Endothelial cell of umbilical vein (primary cell): ENCODE measurements at regions of chr7 and their contacts with region 1.

Region 1: DNA sequence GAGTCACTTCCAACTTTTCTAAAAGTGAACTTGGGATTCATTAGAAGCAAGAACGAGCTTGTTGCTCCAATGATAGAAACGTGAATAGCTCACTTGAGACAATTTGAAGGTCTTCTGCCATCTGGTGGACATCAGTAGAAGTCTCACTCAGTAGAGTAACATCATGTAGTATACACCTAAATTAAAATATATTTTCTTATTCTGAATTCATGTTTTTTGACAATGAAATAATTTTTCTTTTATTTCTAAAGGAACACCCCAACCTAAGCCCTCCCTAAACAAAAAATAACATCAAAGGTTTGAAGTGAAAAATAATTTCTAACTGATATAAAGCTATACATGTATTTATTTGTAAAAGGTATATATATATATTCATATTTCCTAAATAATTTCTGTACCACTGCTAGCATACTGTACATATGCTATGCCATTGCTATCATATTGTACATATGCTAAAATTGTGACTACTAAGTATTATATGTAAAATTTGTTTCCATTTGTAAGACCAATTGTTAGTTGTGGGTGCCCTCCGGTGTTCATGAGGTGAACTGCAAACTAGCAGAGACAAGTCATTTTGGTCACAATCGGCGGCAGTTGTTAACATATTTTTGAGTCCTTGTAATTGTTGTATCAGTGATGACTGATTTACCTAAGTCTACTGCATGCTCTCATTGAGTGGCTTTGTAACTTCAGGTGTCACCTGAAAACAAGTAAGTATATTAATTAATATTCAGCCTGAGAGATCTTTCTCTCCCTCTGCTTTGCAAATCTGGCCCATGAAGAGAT is 121.9 kb downstream of the PTPRZ1 start:
- DNase-seq: peak; percentile 69
- H3K4me3 ChIP-seq: no peak overlapping the region
- H3K27ac ChIP-seq: no peak overlapping the region
- H3K4me1 ChIP-seq: peaks cover 2% of the 10 kb centered on the region
- H3K27me3 ChIP-seq: peaks cover 3 to 5% of the 10 kb centered on the region in 2 experiments
- CTCF ChIP-seq: peak; percentile 45 to 59
- POLR2A ChIP-seq: no peak

Region 2: GRCh38 chr7:121107923-121108498 is 886.8 kb before region 1 on chr7:
- CTCF ChIA-PET with region 1: interaction called, 18 read pairs
- POLR2A ChIA-PET with region 1: no interaction called
- dilution Hi-C with region 1: no loop called
- intact Hi-C with region 1: no loop called
- DNase-seq: peak; percentile 78
- H3K4me3 ChIP-seq: no peak overlapping the region
- H3K27ac ChIP-seq: no peak overlapping the region
- H3K4me1 ChIP-seq: no peaks in the 10 kb centered on the region
- H3K27me3 ChIP-seq: peaks cover 12 to 16% of the 10 kb centered on the region in 2 experiments
- CTCF ChIP-seq: peak; percentile 57 to 59
- POLR2A ChIP-seq: no peak

Region 3: GRCh38 chr7:121360564-121360963 is 634.3 kb before region 1 on chr7:
- CTCF ChIA-PET with region 1: interaction called, 30 read pairs
- POLR2A ChIA-PET with region 1: no interaction called
- dilution Hi-C with region 1: no loop called
- intact Hi-C with region 1: no loop called
- DNase-seq: no peak
- H3K4me3 ChIP-seq: no peak overlapping the region
- H3K27ac ChIP-seq: no peak overlapping the region
- H3K4me1 ChIP-seq: no peaks in the 10 kb centered on the region
- H3K27me3 ChIP-seq: no peaks in the 10 kb centered on the region
- CTCF ChIP-seq: no peak
- POLR2A ChIP-seq: no peak

Region 4: GRCh38 chr7:121563177-121563576 is 431.6 kb before region 1 on chr7:
- CTCF ChIA-PET with region 1: interaction called, 12 read pairs
- POLR2A ChIA-PET with region 1: no interaction called
- dilution Hi-C with region 1: no loop called
- intact Hi-C with region 1: loop called (anchors 1 kb)
- DNase-seq: no peak
- H3K4me3 ChIP-seq: no peak overlapping the region
- H3K27ac ChIP-seq: no peak overlapping the region
- H3K4me1 ChIP-seq: no peaks in the 10 kb centered on the region
- H3K27me3 ChIP-seq: no peaks in the 10 kb centered on the region
- CTCF ChIP-seq: peak in 1 of 2 donors; percentile 34
- POLR2A ChIP-seq: no peak

Region 5: DNA sequence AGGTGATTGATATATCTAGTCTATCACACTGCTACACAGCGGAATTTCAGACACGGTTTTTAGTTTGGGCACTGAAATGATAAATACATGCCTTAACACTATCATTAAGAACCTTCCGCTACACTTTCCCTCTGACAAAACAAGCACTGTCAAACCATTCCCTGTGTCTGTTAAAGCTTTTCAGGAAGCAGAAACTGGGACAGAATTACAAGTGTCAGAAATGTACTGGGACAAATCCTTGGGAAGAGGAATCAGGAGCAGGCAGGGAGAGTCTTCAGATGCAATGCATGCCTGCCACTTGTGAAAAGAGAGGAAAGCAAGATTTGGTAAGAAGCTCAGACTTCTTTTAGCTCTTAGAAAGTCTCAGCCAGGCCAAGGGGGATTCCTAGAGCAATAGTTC is 318.6 kb before region 1 on chr7:
- CTCF ChIA-PET with region 1: no interaction called
- POLR2A ChIA-PET with region 1: no interaction called
- dilution Hi-C with region 1: no loop called
- intact Hi-C with region 1: no loop called
- DNase-seq: no peak
- H3K4me3 ChIP-seq: no peak overlapping the region
- H3K27ac ChIP-seq: no peak overlapping the region
- H3K4me1 ChIP-seq: no peaks in the 10 kb centered on the region
- H3K27me3 ChIP-seq: no peaks in the 10 kb centered on the region
- CTCF ChIP-seq: no peak
- POLR2A ChIP-seq: no peak

Region 6: DNA sequence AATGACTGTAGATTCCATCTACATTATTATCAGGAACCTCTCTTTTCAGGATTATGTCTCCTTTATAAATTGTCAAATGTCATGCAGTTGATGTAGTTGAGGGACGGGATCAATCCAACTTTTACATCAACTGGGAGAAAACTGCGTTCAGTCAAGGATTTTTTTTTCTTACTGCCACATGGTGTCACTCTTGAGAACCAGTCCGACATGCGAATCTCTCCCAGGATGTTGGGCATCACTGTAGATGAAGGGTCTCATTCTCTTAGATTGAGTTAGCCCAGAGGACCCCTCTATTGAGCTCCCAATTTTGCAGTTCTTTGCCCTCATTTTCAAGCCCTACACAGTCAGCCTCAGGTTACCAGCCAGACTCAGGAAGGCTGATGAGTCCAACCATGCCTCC is 242.1 kb before region 1 on chr7:
- CTCF ChIA-PET with region 1: interaction called, 53 read pairs
- POLR2A ChIA-PET with region 1: no interaction called
- dilution Hi-C with region 1: no loop called
- intact Hi-C with region 1: loop called (anchors 1 kb)
- DNase-seq: no peak
- H3K4me3 ChIP-seq: no peak overlapping the region
- H3K27ac ChIP-seq: no peak overlapping the region
- H3K4me1 ChIP-seq: no peaks in the 10 kb centered on the region
- H3K27me3 ChIP-seq: no peaks in the 10 kb centered on the region
- CTCF ChIP-seq: no peak
- POLR2A ChIP-seq: no peak

Region 7: GRCh38 chr7:121954803-121955202 is 40.0 kb before region 1 on chr7:
- CTCF ChIA-PET with region 1: interaction called, 13 read pairs
- POLR2A ChIA-PET with region 1: no interaction called
- dilution Hi-C with region 1: no loop called
- intact Hi-C with region 1: no loop called
- DNase-seq: no peak
- H3K4me3 ChIP-seq: no peak overlapping the region
- H3K27ac ChIP-seq: no peak overlapping the region
- H3K4me1 ChIP-seq: no peaks in the 10 kb centered on the region
- H3K27me3 ChIP-seq: no peaks in the 10 kb centered on the region
- CTCF ChIP-seq: no peak
- POLR2A ChIP-seq: no peak